Esophagus squamous epithelium (tissue), 5 donors: ENCODE measurements at regions of chr19 and their contacts with region 1.

Region 1: DNA sequence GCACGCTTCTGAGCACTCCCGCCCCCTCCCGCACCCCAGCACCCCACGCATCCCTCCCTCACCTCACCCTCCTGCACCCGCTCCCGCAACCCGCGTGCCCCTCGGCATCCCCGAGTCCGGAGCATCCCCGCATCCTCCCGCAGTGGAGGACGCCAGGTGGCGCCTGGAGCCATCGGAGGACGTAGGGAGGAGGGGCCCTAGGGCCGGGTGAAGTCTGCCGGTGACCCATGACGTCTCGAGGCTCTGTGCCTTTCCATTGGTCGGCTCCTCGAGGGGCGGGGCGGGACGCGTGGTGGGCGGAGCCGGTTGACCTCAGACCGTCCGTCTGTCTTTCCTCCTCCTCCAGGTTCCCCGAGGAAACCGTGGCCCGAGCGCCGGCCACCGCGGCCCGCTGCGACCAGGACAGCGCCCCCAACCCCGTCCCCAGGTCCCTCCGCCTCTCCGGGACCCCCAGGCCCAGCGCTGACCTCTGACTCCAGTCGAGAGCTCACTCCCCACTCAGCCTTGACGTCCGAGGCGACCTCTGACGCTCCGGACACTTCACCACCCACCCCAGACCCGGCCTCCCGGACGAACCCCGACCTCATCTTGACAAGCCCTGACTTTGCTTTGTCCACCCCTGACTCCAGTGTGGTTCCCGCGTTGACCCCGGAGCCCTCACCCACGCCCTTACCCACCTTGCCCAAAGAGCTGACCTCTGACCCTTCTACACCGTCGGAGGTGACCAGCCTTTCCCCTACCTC is 19.9 kb downstream of the SBK2 start:
- DNase-seq: peak; percentile 49
- H3K4me3 ChIP-seq: peak overlapping the region; percentile 28 to 80 (median 52)
- H3K27ac ChIP-seq: peak overlapping the region; percentile 79 to 94 (median 88)
- H3K4me1 ChIP-seq: peaks cover 0 to 23% (median 10%) of the 10 kb centered on the region in 3 donors
- H3K27me3 ChIP-seq: no peaks in the 10 kb centered on the region
- CTCF ChIP-seq: peak; percentile 77 to 94 (median 89)
- POLR2A ChIP-seq: peak in 1 of 4 donors; percentile 12

Region 2: DNA sequence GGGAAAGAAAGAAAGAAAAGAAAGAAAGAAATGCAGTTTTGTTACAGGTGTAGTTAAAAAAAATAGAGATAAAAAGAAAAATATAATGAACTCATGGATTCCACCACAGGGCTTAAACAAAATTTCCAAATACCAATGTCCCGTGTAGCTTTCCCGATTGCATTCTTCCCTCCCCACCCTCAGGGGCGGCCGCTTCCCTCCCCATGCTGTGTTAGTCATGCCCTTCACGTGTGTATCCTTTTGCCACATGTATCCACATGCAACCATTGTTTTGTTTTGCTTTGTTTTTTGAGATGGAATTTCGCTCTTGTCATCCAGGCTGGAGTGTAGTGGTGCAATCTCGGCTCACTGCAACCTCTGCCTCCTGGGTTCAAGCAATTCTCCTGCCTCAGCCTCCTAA is 180.9 kb before region 1 on chr19:
- intact Hi-C with region 1: no loop called
- DNase-seq: no peak
- H3K4me3 ChIP-seq: no peak overlapping the region
- H3K27ac ChIP-seq: no peak overlapping the region
- H3K4me1 ChIP-seq: peaks cover 11 to 22% (median 13%) of the 10 kb centered on the region in 3 donors
- H3K27me3 ChIP-seq: peaks cover 0 to 37% (median 0%) of the 10 kb centered on the region in 4 donors
- CTCF ChIP-seq: no peak
- POLR2A ChIP-seq: no peak

Region 3: GRCh38 chr19:55611983-55612645 is 95.1 kb after region 1 on chr19:
- intact Hi-C with region 1: loop called (anchors 5 kb)
- DNase-seq: no peak
- H3K4me3 ChIP-seq: no peak overlapping the region
- H3K27ac ChIP-seq: no peak overlapping the region
- H3K4me1 ChIP-seq: peaks cover 3 to 31% (median 4%) of the 10 kb centered on the region in 3 donors
- H3K27me3 ChIP-seq: no peaks in the 10 kb centered on the region
- CTCF ChIP-seq: no peak
- POLR2A ChIP-seq: no peak

Region 4: GRCh38 chr19:55632463-55632834 is 115.4 kb after region 1 on chr19:
- intact Hi-C with region 1: loop called (anchors 5 kb)
- DNase-seq: peak; percentile 79
- H3K4me3 ChIP-seq: no peak overlapping the region
- H3K27ac ChIP-seq: peak overlapping the region; percentile 19 to 55 (median 44)
- H3K4me1 ChIP-seq: peaks cover 26 to 49% (median 35%) of the 10 kb centered on the region in 3 donors
- H3K27me3 ChIP-seq: no peaks in the 10 kb centered on the region
- CTCF ChIP-seq: peak; percentile 85 to 94 (median 92)
- POLR2A ChIP-seq: no peak